IMR-90 (cell line): ENCODE measurements at regions of chr7 and their contacts with region 1.

Region 1: DNA sequence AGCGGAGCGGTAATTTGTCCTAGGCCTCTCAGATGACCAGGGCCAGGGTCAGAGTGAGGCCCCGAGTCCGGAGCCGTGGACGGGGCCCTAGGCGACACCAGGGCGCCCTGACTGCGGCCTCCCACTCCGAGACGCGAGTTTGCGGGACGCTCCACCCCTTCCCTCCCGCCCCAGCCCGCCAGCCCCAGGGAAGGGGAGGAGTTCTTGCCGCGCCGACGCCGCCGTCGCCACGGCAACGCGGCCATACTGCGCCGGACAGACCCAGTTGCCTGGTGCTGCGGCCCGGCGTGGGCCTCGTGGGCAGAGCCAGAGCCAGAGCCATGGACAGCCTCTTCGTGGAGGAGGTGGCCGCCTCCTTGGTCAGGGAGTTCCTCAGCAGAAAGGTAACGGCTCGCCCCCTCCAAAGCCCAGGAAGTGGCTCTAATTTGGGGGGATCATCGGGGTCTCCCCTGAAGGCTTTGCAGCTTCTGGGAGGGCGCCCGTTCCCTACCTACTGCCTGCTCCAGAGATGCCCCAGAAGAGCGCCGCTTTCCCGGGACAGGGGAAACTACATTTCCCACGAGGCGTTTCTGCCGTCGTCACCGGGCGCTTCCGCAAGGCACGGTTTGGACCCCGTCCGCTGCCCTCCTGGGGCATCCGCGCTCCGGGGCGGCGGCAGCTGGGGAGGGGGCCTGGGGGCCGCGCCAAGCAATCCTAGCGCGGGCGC is at the start of gene MINDY4:
- DNase-seq: peak; percentile 80
- ATAC-seq: peak; percentile 98
- H3K4me3 ChIP-seq: peak within 1 kb of the TSS; percentile 65
- H3K27ac ChIP-seq: peak within 1 kb of the TSS; percentile 71
- H3K4me1 ChIP-seq: 0 out of 2 replicates have a peak, but pooled peaks cover 2% of the 10 kb centered on the region
- H3K27me3 ChIP-seq: no peaks in the 10 kb centered on the region
- CTCF ChIP-seq: no peak
- POLR2A ChIP-seq: no peak; the same call in 1 of the 2 replicates
- RAD21 ChIP-seq: no peak
- total RNA-seq, gene MINDY4: 3.6 TPM in 2 replicates

Region 2: DNA sequence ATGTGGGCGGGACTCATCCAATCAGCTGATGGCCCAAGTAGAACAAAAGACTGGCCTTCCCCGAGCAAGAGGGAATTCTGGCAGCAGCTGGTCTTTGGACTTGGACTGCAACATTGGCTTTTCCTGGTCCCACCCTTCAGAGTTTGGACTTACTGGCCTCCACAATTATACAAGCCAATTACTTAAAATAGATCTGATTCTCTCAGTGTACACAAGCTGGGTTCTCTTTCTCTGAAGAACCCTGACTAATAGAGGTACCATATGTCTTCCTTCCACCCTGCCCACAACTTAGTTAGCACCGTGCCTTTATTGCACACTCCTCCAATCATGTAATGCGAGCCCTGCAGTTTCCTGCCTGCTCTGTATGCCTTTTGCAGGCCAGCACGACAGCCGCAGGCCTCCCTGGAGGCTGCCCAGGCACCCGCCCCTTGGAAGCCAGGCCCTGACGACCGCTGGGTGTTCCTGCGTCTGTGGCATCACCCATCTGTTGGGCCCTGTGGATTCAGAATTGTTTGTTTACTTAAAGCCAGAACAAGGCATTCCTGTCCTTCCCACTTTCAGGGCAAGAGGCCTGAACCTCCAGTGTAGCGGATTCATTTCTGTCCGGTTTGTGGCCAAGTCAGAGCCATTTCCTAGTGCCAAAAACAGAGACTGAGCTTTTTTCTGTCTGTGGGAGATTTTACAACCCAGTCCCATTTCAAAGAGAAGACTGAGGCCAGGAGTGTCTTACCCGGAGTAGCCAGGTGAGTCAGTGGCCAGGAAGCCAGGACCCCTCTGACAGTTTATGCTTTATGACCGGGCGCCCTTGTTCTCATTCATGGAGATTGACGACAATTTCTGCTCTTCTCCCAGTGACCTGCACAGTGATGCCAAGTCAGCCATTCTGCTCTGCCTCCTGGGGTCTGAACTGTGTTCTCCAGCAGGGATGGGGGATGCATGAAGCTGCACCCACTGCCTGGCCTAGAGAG is 20.4 kb before region 1 on chr7:
- CTCF ChIA-PET with region 1: no interaction called
- POLR2A ChIA-PET with region 1: no interaction called
- dilution Hi-C with region 1: no loop called
- in situ Hi-C with region 1: no loop called
- intact Hi-C with region 1: loop called (anchors 1 kb)
- DNase-seq: peak; percentile 92
- ATAC-seq: peak; percentile 90
- H3K4me3 ChIP-seq: no peak overlapping the region
- H3K27ac ChIP-seq: peak overlapping the region; percentile 93
- H3K4me1 ChIP-seq: peaks cover 29% of the 10 kb centered on the region
- H3K27me3 ChIP-seq: no peaks in the 10 kb centered on the region
- CTCF ChIP-seq: no peak
- POLR2A ChIP-seq: no peak
- RAD21 ChIP-seq: no peak

Region 3: GRCh38 chr7:31074120-31074383 is 302.7 kb after region 1 on chr7:
- CTCF ChIA-PET with region 1: no interaction called
- POLR2A ChIA-PET with region 1: no interaction called
- dilution Hi-C with region 1: no loop called
- in situ Hi-C with region 1: no loop called
- intact Hi-C with region 1: no loop called
- DNase-seq: no peak
- ATAC-seq: no peak
- H3K4me3 ChIP-seq: no peak overlapping the region
- H3K27ac ChIP-seq: no peak overlapping the region
- H3K4me1 ChIP-seq: no peaks in the 10 kb centered on the region
- H3K27me3 ChIP-seq: peaks cover 8% of the 10 kb centered on the region; the same call in 1 of the 2 replicates
- CTCF ChIP-seq: no peak
- POLR2A ChIP-seq: no peak
- RAD21 ChIP-seq: no peak